Heart right ventricle (tissue), 16 donors: ENCODE measurements at regions of chr14 and their contacts with region 1.

Region 1: DNA sequence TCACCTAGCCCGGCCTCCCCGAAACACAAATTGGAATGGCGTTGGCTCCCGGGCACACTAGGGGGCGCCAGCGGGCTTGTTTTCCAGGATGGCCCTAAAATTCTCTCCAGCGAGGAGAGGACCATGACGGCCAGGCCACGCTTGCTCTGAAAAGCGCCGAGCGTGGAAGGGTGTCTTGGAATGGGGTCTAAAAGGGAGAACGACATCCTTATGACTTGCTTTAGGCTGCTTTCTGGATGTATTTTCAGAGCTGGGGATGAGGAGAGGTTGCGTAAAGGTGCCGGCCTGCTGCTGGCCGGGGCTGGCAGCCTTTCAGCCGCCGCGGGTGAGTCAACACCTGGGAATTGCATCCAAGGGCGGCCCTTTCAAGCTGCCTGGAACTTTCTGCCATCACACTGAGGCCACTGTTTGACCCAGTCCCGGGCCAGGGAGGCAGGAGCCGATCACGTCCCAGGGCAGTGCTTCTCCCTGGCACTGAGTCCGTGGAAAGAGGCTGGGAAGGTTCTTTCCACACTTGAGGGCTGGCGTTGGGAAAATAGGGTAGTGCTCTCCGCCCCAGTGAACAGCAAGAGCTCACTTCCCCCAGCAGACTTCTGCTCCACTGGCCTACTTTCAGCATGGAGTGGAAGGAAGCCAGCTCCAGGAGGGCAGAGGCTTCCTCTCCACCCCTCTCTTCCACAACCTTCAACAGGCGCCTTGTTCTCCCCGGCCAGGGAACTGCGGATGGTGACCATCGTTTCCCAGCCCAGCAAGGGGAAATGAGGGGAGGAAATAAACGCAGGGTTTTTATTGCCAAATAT is 216.2 kb downstream of the TTC8 start:
- DNase-seq: peak; percentile 87 to 90
- ATAC-seq: peak; percentile 86 to 99 (median 95)
- H3K4me3 ChIP-seq: peak overlapping the region in 9 of 10 donors; percentile 24 to 60 (median 51)
- H3K27ac ChIP-seq: peak overlapping the region; percentile 67 to 84 (median 78)
- H3K4me1 ChIP-seq: peaks cover 0 to 16% (median 11%) of the 10 kb centered on the region in 9 donors
- H3K27me3 ChIP-seq: peaks cover 0 to 6% (median 0%) of the 10 kb centered on the region in 7 donors
- CTCF ChIP-seq: peak; percentile 80 to 99 (median 95)

Region 2: DNA sequence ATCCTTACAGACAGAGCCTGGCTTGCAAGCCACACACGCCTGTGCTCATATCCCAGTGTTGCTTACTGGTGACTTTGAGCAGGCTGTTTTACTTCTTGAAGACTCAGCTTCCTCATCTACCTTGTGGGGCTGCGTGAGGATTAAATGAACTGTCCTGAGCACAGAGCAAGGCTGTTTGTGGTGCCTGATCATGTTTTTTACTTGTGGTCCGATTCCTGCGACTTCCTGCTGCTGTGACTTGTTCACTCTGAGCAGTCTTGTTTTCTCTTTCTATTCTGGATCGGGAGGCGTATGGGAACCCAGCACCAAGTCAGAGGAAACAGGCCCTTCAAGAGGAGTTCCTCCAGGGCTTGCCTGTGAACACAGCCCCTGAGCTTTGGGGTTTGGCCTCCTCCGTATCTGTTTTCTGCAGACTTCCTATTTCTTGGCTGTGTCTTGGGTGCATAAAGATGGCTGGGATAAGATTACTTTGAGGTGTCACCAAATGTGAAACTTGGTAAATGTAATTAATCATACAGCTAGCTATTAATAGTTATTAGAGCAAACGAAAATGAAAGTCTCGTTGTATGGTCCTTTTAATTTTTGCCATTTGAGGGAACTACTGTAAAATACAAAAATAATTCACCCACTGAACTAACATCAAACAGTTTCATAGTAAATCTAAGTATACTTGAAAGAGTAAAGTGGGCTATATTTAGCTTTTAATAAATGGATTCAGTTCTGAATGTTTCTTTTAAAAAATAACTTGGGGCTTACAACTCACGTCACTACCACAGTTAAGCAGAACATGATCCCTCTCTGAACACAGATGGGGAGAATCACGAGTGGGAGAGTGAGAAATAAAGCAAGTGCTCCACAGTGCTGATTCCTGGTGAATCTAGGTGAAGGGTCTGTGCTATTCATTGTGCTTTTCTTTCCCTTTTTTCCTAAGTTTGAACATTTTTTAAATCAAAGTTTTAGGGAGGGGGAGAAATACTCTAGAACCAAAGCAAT is 124.8 kb after region 1 on chr14:
- intact Hi-C with region 1: loop called in 2 of 10 experiments (anchors 5 to 10 kb)
- DNase-seq: peak in 1 of 2 donors; percentile 19
- ATAC-seq: peak in 7 of 8 donors; percentile 36 to 85 (median 72)
- H3K4me3 ChIP-seq: peak overlapping the region in 7 of 10 donors; percentile 4 to 36 (median 27)
- H3K27ac ChIP-seq: peak overlapping the region in 9 of 10 donors; percentile 31 to 81 (median 67)
- H3K4me1 ChIP-seq: peaks cover 6 to 41% (median 19%) of the 10 kb centered on the region in 9 donors
- H3K27me3 ChIP-seq: no peaks in the 10 kb centered on the region
- CTCF ChIP-seq: no peak

Region 3: GRCh38 chr14:89221109-89221810 is 180.6 kb after region 1 on chr14:
- intact Hi-C with region 1: loop called in 1 of 10 experiments (anchors 10 kb)
- DNase-seq: no peak
- ATAC-seq: peak; percentile 53 to 91 (median 82)
- H3K4me3 ChIP-seq: no peak overlapping the region
- H3K27ac ChIP-seq: peak overlapping the region in 2 of 10 donors; percentile 3 to 11
- H3K4me1 ChIP-seq: peaks cover 2 to 28% (median 13%) of the 10 kb centered on the region in 9 donors
- H3K27me3 ChIP-seq: no peaks in the 10 kb centered on the region
- CTCF ChIP-seq: no peak

Region 4: GRCh38 chr14:89618811-89619551 is 578.3 kb after region 1 on chr14:
- intact Hi-C with region 1: loop called in 2 of 10 experiments (anchors 5 to 10 kb)
- DNase-seq: peak; percentile 51 to 79
- ATAC-seq: peak; percentile 75 to 97 (median 90)
- H3K4me3 ChIP-seq: peak overlapping the region; percentile 58 to 88 (median 79)
- H3K27ac ChIP-seq: peak overlapping the region; percentile 69 to 90 (median 82)
- H3K4me1 ChIP-seq: peaks cover 6 to 54% (median 39%) of the 10 kb centered on the region in 9 donors
- H3K27me3 ChIP-seq: no peaks in the 10 kb centered on the region
- CTCF ChIP-seq: no peak

Region 5: GRCh38 chr14:89773644-89774316 is 733.1 kb after region 1 on chr14:
- intact Hi-C with region 1: loop called in 6 of 10 experiments (anchors 5 to 10 kb)
- DNase-seq: peak in 1 of 2 donors; percentile 43
- ATAC-seq: peak in 4 of 8 donors; percentile 44 to 87 (median 65)
- H3K4me3 ChIP-seq: no peak overlapping the region
- H3K27ac ChIP-seq: no peak overlapping the region
- H3K4me1 ChIP-seq: peaks cover 0 to 27% (median 7%) of the 10 kb centered on the region in 9 donors
- H3K27me3 ChIP-seq: no peaks in the 10 kb centered on the region
- CTCF ChIP-seq: no peak

Region 6: DNA sequence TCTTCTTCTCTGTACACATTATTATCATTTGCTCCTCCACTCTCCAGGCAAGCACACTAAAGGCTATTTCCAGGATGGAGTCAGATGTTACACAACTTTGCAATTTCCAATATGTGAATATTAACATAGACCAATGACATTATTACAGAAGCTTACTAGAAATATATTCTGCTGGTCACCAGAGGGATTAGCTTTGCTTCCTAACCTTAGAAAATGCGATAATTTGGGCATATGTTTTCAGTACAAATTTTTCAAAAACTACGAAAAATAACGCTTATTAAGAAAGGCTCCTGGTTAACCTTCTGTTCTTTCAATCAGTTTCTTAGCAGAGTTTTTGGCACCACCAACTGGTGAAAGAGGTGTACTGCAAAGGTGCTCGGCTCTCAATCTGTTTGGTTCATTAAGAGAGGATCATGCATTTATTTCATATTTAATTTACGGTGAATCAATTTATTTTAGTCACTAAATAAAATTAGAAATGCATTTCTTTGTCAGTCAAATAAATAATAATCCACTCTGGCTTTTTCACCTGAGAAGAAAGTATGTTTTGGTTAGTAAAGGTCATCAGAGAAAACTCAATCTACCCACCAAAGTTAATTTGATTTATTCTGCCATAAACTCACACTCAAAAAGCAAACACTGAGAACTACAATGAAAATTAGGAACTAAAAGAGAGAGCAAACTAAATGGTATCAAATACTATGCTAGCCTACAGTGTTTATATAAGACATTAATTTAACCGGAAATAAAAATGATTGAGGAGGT is 874.6 kb after region 1 on chr14:
- intact Hi-C with region 1: loop called in 6 of 10 experiments (anchors 1 to 5 kb)
- DNase-seq: peak in 1 of 2 donors; percentile 41
- ATAC-seq: peak in 3 of 8 donors; percentile 36 to 65 (median 63)
- H3K4me3 ChIP-seq: no peak overlapping the region
- H3K27ac ChIP-seq: no peak overlapping the region
- H3K4me1 ChIP-seq: peaks cover 0 to 14% (median 0%) of the 10 kb centered on the region in 9 donors
- H3K27me3 ChIP-seq: no peaks in the 10 kb centered on the region
- CTCF ChIP-seq: peak; percentile 89 to 98 (median 96)